ENCODE measurements at regions of chr6 and their contacts with region 1.

Region 1: GRCh38 chr6:106787327-106788196 is 158.2 kb downstream of the QRSL1 start:
- DNase-seq: peak; percentile 66
- H3K4me3 Mint-ChIP-seq: peak overlapping the region; percentile 74
- H3K27ac Mint-ChIP-seq: peak overlapping the region; percentile 95
- H3K4me1 Mint-ChIP-seq: peaks cover 84% of the 10 kb centered on the region
- H3K27me3 Mint-ChIP-seq: no peaks in the 10 kb centered on the region
- CTCF ChIP-seq: no peak

Region 2: GRCh38 chr6:106287205-106287604 is 500.4 kb before region 1 on chr6:
- CTCF ChIA-PET with region 1: no interaction called
- intact Hi-C with region 1: no loop called
- DNase-seq: no peak
- H3K4me3 Mint-ChIP-seq: no peak overlapping the region
- H3K27ac Mint-ChIP-seq: no peak overlapping the region
- H3K4me1 Mint-ChIP-seq: no peaks in the 10 kb centered on the region
- H3K27me3 Mint-ChIP-seq: no peaks in the 10 kb centered on the region
- CTCF ChIP-seq: no peak

Region 3: DNA sequence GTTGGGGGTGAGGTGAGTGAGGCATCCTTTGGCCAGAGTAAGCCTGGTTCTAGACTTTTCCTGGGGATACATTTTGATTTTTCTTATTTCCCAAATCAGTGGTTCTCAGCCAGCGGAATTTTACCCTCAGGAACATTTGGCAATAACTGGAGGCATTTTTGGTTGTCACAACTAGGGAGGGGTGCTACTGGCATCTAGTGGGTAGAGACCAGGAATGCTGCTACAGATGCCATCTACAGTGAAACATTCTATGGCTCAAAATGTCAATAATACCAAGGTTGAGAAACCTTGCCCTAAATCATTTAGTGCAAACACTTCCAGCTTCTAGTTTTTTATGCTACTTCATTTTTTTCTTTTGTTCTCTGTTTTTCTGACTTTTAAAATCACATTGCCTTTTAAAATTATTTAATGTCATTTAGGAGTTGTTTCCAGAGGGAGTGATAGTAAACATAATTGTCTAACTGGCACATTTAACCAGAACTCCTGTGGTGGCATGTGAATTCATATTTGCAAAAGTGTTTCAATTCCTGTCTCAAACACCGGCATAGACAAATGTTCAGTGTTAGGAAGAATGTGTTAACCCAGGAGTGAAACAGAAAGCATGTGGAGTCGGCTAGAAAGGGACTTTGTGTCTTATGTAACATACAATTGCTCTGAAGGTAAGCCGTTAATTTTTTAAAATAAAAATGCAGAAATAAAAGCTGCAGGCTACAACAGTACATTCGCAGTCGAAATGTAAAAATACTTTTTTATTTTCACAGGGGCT is 99.2 kb before region 1 on chr6:
- CTCF ChIA-PET with region 1: no interaction called
- intact Hi-C with region 1: no loop called
- DNase-seq: peak; percentile 9
- H3K4me3 Mint-ChIP-seq: no peak overlapping the region
- H3K27ac Mint-ChIP-seq: no peak overlapping the region
- H3K4me1 Mint-ChIP-seq: peaks cover 15% of the 10 kb centered on the region
- H3K27me3 Mint-ChIP-seq: no peaks in the 10 kb centered on the region
- CTCF ChIP-seq: no peak

Region 4: DNA sequence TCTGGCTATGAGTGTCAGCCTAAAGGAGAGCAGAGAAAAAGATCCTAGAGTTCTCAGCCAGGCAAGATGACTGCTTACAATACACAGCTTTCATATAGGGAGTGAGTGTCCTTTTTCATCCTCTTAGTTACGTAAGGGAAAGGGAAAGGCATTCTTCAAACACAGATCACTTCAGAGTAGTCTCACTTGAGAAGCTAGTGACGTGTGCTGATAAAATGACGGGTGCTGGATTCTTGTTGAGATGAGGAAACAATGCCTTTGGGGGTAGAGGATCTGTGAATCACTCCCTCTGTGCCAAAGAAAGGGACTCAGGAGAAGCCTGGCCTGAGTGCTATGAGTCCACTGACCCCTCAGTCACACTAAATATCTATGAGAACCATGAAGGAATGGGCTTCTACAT is 40.9 kb before region 1 on chr6:
- CTCF ChIA-PET with region 1: no interaction called
- intact Hi-C with region 1: loop called (anchors 2 kb)
- DNase-seq: peak; percentile 59
- H3K4me3 Mint-ChIP-seq: peak overlapping the region; percentile 27
- H3K27ac Mint-ChIP-seq: peak overlapping the region; percentile 89
- H3K4me1 Mint-ChIP-seq: peaks cover 88% of the 10 kb centered on the region
- H3K27me3 Mint-ChIP-seq: no peaks in the 10 kb centered on the region
- CTCF ChIP-seq: no peak

Region 5: GRCh38 chr6:106823732-106824351 is 36.3 kb after region 1 on chr6:
- CTCF ChIA-PET with region 1: no interaction called
- intact Hi-C with region 1: no loop called
- DNase-seq: peak; percentile 28
- H3K4me3 Mint-ChIP-seq: no peak overlapping the region
- H3K27ac Mint-ChIP-seq: no peak overlapping the region
- H3K4me1 Mint-ChIP-seq: peaks cover 31% of the 10 kb centered on the region
- H3K27me3 Mint-ChIP-seq: no peaks in the 10 kb centered on the region
- CTCF ChIP-seq: no peak

Region 6: GRCh38 chr6:106858653-106859092 is 71.1 kb after region 1 on chr6:
- CTCF ChIA-PET with region 1: no interaction called
- intact Hi-C with region 1: loop called (anchors 2 kb)
- DNase-seq: peak; percentile 77
- H3K4me3 Mint-ChIP-seq: no peak overlapping the region
- H3K27ac Mint-ChIP-seq: peak overlapping the region; percentile 73
- H3K4me1 Mint-ChIP-seq: peaks cover 35% of the 10 kb centered on the region
- H3K27me3 Mint-ChIP-seq: no peaks in the 10 kb centered on the region
- CTCF ChIP-seq: no peak